Posterior vena cava (tissue), 2 donors: ENCODE measurements at regions of chr2 and their contacts with region 1.

Region 1: GRCh38 chr2:236642584-236643291 is 73.1 kb downstream of the ACKR3 start:
- DNase-seq: peak; percentile 97

Region 2: GRCh38 chr2:234840336-234840735 is 1802.4 kb before region 1 on chr2:
- intact Hi-C with region 1: no loop called
- DNase-seq: no peak

Region 3: GRCh38 chr2:236794174-236794957 is 151.6 kb after region 1 on chr2:
- intact Hi-C with region 1: loop called in 1 of 2 experiments (anchors 10 kb)
- DNase-seq: peak; percentile 45